ENCODE measurements at regions of chr6 and their contacts with region 1.

Region 1: GRCh38 chr6:53244958-53245357 is 96.3 kb upstream of the GCM1 start:
- DNase-seq: no peak
- ATAC-seq: no peak
- H3K4me3 ChIP-seq: no peak overlapping the region
- H3K27ac ChIP-seq: no peak overlapping the region
- H3K4me1 ChIP-seq: no peaks in the 10 kb centered on the region
- H3K27me3 ChIP-seq: peaks cover 15% of the 10 kb centered on the region
- CTCF ChIP-seq: no peak
- POLR2A ChIP-seq: no peak
- RAD21 ChIP-seq: no peak

Region 2: GRCh38 chr6:53476964-53477363 is 232.0 kb after region 1 on chr6:
- CTCF ChIA-PET with region 1: no interaction called
- POLR2A ChIA-PET with region 1: no interaction called
- dilution Hi-C with region 1: no loop called
- in situ Hi-C with region 1: no loop called
- intact Hi-C with region 1: loop called (anchors 10 kb)
- DNase-seq: no peak
- ATAC-seq: peak; percentile 46
- H3K4me3 ChIP-seq: no peak overlapping the region
- H3K27ac ChIP-seq: no peak overlapping the region
- H3K4me1 ChIP-seq: no peaks in the 10 kb centered on the region
- H3K27me3 ChIP-seq: peaks cover 4% of the 10 kb centered on the region
- CTCF ChIP-seq: no peak
- POLR2A ChIP-seq: no peak
- RAD21 ChIP-seq: no peak

Region 3: DNA sequence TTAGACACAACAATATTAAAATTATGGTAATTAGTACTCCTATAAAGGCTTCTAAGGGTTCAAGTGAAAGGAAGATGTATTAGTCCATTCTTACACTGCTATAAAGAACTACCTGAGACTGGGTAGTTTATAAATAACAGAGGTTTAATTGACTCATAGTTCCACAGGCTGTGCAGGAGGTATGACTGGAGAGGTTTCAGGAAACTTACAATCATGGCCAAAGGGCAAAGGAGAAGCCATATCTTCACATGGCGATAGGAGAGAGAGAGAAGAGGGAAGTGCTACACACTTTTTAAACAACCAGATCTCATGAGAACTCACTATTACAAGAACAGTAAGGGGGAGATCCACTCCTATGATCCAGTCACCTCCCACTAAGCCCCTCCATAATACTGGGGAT is 1116.2 kb after region 1 on chr6:
- CTCF ChIA-PET with region 1: no interaction called
- POLR2A ChIA-PET with region 1: no interaction called
- dilution Hi-C with region 1: no loop called
- in situ Hi-C with region 1: no loop called
- intact Hi-C with region 1: loop called (anchors 5 kb)
- DNase-seq: no peak
- ATAC-seq: no peak
- H3K4me3 ChIP-seq: no peak overlapping the region
- H3K27ac ChIP-seq: no peak overlapping the region
- H3K4me1 ChIP-seq: no peaks in the 10 kb centered on the region
- H3K27me3 ChIP-seq: no peaks in the 10 kb centered on the region
- CTCF ChIP-seq: no peak
- POLR2A ChIP-seq: no peak
- RAD21 ChIP-seq: no peak